ENCODE measurements at regions of chr7 and their contacts with region 1.

Region 1: DNA sequence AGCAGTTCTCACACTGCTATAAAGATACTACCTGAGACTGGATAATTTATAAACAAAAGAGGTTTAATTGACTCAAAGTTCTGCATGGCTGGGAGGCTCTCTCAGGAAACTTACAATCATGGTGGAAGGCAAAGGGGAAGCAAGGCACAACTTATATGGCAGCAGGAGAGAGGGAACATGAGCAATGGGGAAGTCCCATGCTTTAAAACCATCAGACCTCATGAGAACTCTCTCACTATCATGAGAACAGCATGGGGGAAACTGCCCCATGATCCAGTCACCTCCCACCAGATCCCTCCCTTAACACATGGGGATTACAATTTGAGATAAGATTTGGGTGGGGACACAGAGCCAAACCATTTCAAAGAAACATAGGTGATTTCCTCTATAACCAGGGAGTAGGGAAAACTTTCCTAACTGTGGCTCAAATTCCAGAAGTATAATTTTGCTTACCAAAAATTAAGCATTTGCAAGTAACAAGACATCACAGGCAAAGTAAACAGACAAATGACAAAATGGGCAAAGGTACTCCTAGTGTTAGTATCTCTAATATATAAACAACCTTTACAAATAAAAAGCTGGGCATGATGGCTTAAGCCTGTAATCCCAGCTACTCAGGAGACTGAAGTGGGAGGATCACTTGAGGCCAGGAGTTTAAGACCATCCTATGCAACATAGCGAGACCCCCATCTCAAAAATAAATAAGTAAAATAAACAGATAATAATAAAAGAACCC is 88.0 kb downstream of the KBTBD2 start:
- DNase-seq: no peak
- ATAC-seq: no peak
- H3K4me3 ChIP-seq: no peak overlapping the region
- H3K27ac ChIP-seq: no peak overlapping the region
- H3K4me1 ChIP-seq: no peaks in the 10 kb centered on the region
- H3K27me3 ChIP-seq: no peaks in the 10 kb centered on the region
- CTCF ChIP-seq: no peak
- POLR2A ChIP-seq: no peak
- RAD21 ChIP-seq: no peak

Region 2: GRCh38 chr7:32761451-32762205 is 41.9 kb before region 1 on chr7:
- CTCF ChIA-PET with region 1: no interaction called
- POLR2A ChIA-PET with region 1: no interaction called
- dilution Hi-C with region 1: no loop called
- in situ Hi-C with region 1: no loop called
- intact Hi-C with region 1: no loop called
- DNase-seq: no peak
- ATAC-seq: no peak
- H3K4me3 ChIP-seq: no peak overlapping the region
- H3K27ac ChIP-seq: no peak overlapping the region
- H3K4me1 ChIP-seq: no peaks in the 10 kb centered on the region; the same call in 1 of the 2 replicates
- H3K27me3 ChIP-seq: no peaks in the 10 kb centered on the region
- CTCF ChIP-seq: no peak
- POLR2A ChIP-seq: no peak
- RAD21 ChIP-seq: no peak

Region 3: DNA sequence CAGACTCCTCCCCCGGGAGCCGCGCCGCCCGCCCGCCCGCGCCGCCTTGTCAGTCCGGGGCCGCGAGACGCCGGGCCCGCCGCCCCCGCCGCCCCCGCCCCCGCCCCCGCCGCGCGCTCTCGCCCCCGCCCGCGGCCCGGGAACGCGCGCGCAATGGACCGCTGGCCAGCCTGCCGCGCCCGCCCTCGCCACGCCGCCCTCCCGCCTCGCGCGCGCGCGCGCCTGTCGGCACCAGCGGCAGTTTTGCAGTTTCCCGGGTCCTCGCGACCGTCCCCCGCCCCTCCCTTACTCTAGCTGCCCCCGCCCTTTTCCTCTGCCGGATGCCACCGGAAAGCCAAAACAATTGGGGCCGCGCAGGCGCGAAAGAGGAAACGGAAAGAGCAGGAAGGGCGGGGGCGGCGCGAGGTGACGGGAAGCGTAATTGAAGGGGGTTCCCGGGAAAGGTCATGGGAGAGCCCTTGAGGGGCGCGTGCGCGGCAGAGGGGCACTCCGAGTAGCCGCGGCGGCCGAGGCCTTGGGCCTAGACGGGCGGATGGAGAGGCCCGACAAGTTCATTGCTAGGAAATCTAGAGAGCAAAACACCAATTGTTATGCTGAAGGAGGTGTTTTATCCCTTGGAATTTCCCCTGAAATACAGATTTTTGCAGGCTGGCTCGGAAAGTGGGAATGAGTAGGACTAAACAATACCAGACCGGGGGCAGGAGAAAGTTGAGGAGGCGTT is 88.4 kb after region 1 on chr7:
- CTCF ChIA-PET with region 1: no interaction called
- POLR2A ChIA-PET with region 1: no interaction called
- dilution Hi-C with region 1: no loop called
- in situ Hi-C with region 1: no loop called
- intact Hi-C with region 1: loop called (anchors 1 kb)
- DNase-seq: peak; percentile 92
- ATAC-seq: peak; percentile 79
- H3K4me3 ChIP-seq: peak overlapping the region; percentile 86
- H3K27ac ChIP-seq: peak overlapping the region; percentile 99
- H3K4me1 ChIP-seq: peaks cover 2% of the 10 kb centered on the region; the same call in 1 of the 2 replicates
- H3K27me3 ChIP-seq: no peaks in the 10 kb centered on the region
- CTCF ChIP-seq: no peak
- POLR2A ChIP-seq: peak; percentile 39; the same call in 1 of the 2 replicates
- RAD21 ChIP-seq: no peak

Region 4: DNA sequence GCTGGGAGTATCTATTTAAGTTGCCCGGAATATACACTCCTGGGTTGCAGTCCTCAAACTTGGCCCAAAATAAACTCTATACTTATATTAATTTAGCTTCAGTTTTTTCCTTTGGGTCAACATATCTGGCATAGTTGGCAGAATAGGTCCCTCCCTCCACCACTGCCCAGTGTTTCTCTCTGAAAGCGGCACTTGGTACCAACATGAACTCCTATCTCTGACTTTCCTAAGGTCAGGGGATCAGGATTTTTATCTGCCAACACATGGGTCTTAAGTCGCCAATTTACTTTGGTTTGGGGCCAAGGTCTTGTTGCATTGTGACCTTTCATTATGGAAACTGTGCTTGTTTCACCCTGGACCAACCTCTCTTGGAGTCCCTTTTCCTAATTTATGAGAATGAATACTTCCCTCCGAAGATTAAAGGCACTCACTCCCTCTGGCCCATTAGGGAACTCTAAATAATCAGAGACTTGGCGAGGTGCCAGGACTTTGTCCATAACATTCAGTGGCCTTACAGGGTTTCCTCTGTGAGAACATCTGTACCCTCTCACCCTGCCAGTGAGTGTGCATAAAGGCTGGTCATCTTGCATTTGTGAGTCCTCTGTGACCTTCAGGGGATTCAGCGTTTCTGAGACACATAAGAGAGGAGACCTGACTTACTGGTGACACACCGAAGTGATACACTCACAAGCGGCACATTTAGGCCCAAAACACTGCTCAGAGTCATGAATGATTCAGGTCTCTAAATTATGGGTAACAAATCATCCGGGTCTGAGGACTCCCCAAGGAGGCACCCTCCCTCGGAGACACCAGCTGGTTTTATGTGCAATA is 134.0 kb after region 1 on chr7:
- CTCF ChIA-PET with region 1: interaction called, 4 read pairs
- POLR2A ChIA-PET with region 1: no interaction called
- dilution Hi-C with region 1: no loop called
- in situ Hi-C with region 1: no loop called
- intact Hi-C with region 1: loop called (anchors 2 kb)
- DNase-seq: peak; percentile 61
- ATAC-seq: peak; percentile 3; the same call in 1 of the 2 replicates
- H3K4me3 ChIP-seq: no peak overlapping the region
- H3K27ac ChIP-seq: peak overlapping the region; percentile 7; the same call in 1 of the 2 replicates
- H3K4me1 ChIP-seq: peaks cover 15% of the 10 kb centered on the region
- H3K27me3 ChIP-seq: no peaks in the 10 kb centered on the region
- CTCF ChIP-seq: no peak
- POLR2A ChIP-seq: no peak
- RAD21 ChIP-seq: no peak

Region 5: GRCh38 chr7:32942786-32943653 is 139.4 kb after region 1 on chr7:
- CTCF ChIA-PET with region 1: interaction called, 4 read pairs
- POLR2A ChIA-PET with region 1: no interaction called
- dilution Hi-C with region 1: no loop called
- in situ Hi-C with region 1: no loop called
- intact Hi-C with region 1: loop called (anchors 1 kb)
- DNase-seq: peak; percentile 71
- ATAC-seq: peak; percentile 97
- H3K4me3 ChIP-seq: peak overlapping the region; percentile 94
- H3K27ac ChIP-seq: peak overlapping the region; percentile 95
- H3K4me1 ChIP-seq: peaks cover under 1% of the 10 kb centered on the region; the same call in 1 of the 2 replicates
- H3K27me3 ChIP-seq: no peaks in the 10 kb centered on the region
- CTCF ChIP-seq: peak; percentile 70
- POLR2A ChIP-seq: no peak; the same call in 1 of the 2 replicates
- RAD21 ChIP-seq: peak; percentile 69

Region 6: DNA sequence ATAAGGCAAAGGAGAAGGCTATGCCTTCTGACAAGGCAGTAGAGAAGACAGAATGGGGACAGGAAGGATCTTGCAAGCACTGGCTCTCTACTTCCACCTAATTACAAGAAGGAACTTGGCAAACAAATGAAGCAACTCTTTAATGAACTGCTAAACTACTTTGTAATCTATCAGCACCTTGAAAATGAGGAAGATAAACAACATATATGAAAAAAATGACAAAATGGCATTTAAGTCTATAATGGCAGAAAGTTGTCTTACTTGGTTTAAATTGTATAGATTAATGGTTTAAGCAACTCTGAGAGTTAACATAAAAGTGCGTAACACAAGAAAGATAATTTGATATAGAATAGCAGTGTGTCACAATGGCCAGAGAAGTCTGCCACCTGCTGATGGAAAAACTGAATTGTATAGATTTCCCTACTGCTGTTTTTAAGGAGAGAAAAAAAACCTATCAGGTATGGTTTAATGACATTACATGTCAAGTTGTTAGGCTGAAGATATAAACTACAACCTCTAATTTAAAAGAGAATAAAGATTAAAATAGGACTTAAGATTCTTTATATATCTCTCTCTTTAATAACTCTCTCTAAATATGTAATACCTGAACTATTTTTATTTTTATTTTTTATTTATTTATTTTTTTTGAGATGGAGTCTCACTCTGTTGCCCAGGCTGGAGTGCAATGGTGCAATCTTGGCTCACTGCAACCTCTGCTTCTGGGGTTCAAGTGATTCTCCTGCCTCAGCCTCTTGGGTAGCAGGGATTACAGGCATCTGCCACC is 247.2 kb after region 1 on chr7:
- CTCF ChIA-PET with region 1: interaction called, 3 read pairs
- POLR2A ChIA-PET with region 1: no interaction called
- dilution Hi-C with region 1: no loop called
- in situ Hi-C with region 1: no loop called
- intact Hi-C with region 1: loop called (anchors 1 kb)
- DNase-seq: peak; percentile 59
- ATAC-seq: peak; percentile 61
- H3K4me3 ChIP-seq: no peak overlapping the region
- H3K27ac ChIP-seq: no peak overlapping the region
- H3K4me1 ChIP-seq: peaks cover 3% of the 10 kb centered on the region
- H3K27me3 ChIP-seq: no peaks in the 10 kb centered on the region
- CTCF ChIP-seq: peak; percentile 68
- POLR2A ChIP-seq: no peak
- RAD21 ChIP-seq: peak; percentile 78

Region 7: DNA sequence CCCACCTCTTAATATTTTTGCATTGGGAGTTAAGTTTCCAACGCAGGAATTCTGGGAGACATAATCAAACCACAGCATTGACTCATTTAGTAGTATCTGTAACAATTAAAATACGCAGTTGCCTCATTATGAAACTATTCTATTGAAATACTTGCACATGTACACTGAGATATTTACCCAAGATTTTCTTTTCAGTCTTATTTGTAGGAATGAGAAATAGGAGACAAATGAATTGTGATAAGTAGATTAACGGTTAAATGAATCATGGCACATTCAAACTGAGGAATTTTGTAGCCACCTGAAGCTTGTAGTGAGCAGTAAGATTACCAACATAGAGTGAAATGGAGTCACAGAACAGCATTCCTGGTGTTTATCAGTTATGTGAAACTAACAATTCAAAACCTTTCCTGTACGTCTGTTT is 287.5 kb after region 1 on chr7:
- CTCF ChIA-PET with region 1: no interaction called
- POLR2A ChIA-PET with region 1: no interaction called
- dilution Hi-C with region 1: no loop called
- in situ Hi-C with region 1: no loop called
- intact Hi-C with region 1: no loop called
- DNase-seq: peak; percentile 74
- ATAC-seq: peak; percentile 82
- H3K4me3 ChIP-seq: no peak overlapping the region
- H3K27ac ChIP-seq: no peak overlapping the region
- H3K4me1 ChIP-seq: peaks cover 5% of the 10 kb centered on the region; the same call in 1 of the 2 replicates
- H3K27me3 ChIP-seq: no peaks in the 10 kb centered on the region
- CTCF ChIP-seq: no peak
- POLR2A ChIP-seq: no peak
- RAD21 ChIP-seq: no peak

Measured in IMR-90 (cell line).